Activated CD8-positive, alpha-beta T cell treated with anti-CD3 and anti-CD28 coated beads for 36 hours (primary cell): ENCODE measurements at regions of chr1 and their contacts with region 1.

Region 1: GRCh38 chr1:2561898-2562545 is 5.9 kb downstream of the TNFRSF14 start:
- DNase-seq: peak; percentile 49
- ATAC-seq: peak; percentile 65
- H3K4me3 Mint-ChIP-seq: no peak overlapping the region
- H3K27ac Mint-ChIP-seq: no peak overlapping the region
- H3K4me1 Mint-ChIP-seq: peaks cover 19% of the 10 kb centered on the region
- H3K27me3 Mint-ChIP-seq: no peaks in the 10 kb centered on the region
- CTCF ChIP-seq: peak; percentile 75

Region 2: GRCh38 chr1:2468041-2468472 is 94.0 kb before region 1 on chr1:
- CTCF ChIA-PET with region 1: no interaction called
- POLR2A ChIA-PET with region 1: no interaction called
- intact Hi-C with region 1: no loop called
- DNase-seq: peak; percentile 52
- ATAC-seq: peak; percentile 59
- H3K4me3 Mint-ChIP-seq: no peak overlapping the region
- H3K27ac Mint-ChIP-seq: no peak overlapping the region
- H3K4me1 Mint-ChIP-seq: no peaks in the 10 kb centered on the region
- H3K27me3 Mint-ChIP-seq: no peaks in the 10 kb centered on the region
- CTCF ChIP-seq: no peak

Region 3: DNA sequence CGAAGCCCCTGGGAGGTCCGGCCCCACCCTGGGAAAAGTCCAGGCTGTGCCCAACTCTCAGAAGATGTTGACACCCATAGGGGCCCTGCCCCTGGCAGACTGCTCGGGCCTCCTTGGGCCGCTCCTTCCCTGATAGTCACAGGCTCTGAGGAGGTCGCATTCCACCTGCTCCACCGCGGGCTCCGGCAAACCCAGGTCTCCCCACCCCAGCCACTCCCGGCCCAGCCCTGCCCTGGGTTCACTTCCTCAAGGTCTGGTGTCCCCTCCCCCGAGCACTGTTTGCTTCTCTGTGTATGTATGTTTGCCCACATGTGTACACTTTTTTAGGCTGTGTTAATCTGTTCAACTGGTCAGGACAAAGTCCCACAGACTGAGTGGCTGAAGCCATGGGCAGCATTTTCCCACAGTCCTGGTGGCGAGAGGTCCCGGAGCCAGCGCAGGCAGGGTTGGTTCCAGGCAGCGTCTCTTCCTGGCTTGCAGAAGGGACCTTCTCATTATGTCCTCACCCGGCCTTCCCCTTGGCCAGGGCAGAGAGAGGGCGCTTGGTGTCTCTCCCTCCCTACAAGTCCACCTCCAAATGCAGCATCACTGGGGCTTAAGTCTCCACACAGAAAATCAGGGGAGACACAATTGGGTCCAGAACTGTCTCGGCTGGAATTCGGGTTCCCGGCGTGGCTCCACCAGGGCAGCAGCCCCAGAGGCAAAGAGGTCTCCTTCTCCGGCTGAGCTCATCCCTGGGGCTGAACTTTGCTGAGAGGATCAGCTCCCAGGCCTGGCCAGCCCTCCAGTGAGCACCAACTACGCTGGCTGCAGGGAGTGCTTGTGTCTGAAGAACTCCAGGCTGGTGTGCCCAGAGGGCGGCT is 14.0 kb after region 1 on chr1:
- CTCF ChIA-PET with region 1: interaction called, 16 read pairs
- POLR2A ChIA-PET with region 1: interaction called, 34 read pairs
- intact Hi-C with region 1: loop called (anchors 2 kb)
- DNase-seq: no peak
- ATAC-seq: no peak
- H3K4me3 Mint-ChIP-seq: peak overlapping the region; percentile 19
- H3K27ac Mint-ChIP-seq: peak overlapping the region; percentile 95
- H3K4me1 Mint-ChIP-seq: peaks cover 54% of the 10 kb centered on the region
- H3K27me3 Mint-ChIP-seq: no peaks in the 10 kb centered on the region
- CTCF ChIP-seq: no peak

Region 4: DNA sequence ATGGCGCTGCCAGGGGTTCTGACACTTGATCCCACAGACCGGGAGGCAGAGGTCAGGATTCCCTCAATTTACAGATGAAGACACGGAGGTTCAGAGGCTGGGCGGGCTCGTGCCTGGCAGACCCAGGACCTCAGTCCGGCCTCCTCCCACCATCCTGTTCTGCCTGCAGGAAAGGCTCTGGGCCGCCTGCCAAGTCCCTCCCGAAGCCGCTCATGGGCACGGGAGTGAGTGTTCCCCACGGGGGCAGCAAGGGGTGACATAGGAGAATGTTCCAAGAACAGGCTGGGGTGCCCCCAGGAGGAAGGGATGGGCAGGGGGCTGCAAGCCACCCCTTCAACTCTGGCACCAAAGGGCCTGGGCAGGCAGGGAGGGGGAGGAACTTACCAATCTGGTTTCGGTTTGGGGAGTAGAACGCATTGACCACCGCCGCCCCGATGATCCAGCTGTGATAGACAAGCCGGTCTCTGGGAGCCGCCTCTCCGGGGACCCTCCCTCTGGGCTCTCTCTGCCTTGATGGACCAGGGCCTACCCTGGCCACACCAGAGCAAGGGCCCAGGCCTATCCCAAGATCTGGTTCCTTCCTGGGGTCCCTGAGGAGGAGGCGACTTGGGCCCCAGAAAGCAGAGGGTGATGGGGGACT is 32.1 kb after region 1 on chr1:
- CTCF ChIA-PET with region 1: no interaction called
- POLR2A ChIA-PET with region 1: no interaction called
- intact Hi-C with region 1: no loop called
- DNase-seq: peak; percentile 1
- ATAC-seq: no peak
- H3K4me3 Mint-ChIP-seq: no peak overlapping the region
- H3K27ac Mint-ChIP-seq: no peak overlapping the region
- H3K4me1 Mint-ChIP-seq: no peaks in the 10 kb centered on the region
- H3K27me3 Mint-ChIP-seq: no peaks in the 10 kb centered on the region
- CTCF ChIP-seq: no peak

Region 5: DNA sequence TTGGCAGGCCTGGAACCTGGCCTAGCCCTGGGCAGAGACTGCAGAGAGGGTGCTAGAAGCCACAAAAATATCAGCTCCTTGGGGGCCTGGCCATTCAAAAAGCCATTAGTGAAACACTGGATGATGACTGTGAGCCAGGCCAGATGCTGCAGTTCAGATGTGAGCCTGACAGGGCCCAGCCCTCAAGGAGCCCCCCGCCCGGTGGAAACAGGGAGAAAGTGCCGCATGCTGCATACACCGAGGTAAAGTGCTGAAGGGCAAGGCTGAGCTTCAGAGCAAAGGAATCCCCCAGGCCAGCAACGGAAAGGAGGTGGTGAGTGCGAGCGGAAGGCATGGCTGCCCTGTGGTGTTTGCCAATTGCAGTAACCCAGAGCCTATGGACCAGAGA is 51.0 kb after region 1 on chr1:
- CTCF ChIA-PET with region 1: no interaction called
- POLR2A ChIA-PET with region 1: no interaction called
- intact Hi-C with region 1: no loop called
- DNase-seq: no peak
- ATAC-seq: no peak
- H3K4me3 Mint-ChIP-seq: no peak overlapping the region
- H3K27ac Mint-ChIP-seq: no peak overlapping the region
- H3K4me1 Mint-ChIP-seq: peaks cover 7% of the 10 kb centered on the region
- H3K27me3 Mint-ChIP-seq: no peaks in the 10 kb centered on the region
- CTCF ChIP-seq: no peak